PC-3 (cell line): ENCODE measurements at regions of chr19 and their contacts with region 1.

Region 1: DNA sequence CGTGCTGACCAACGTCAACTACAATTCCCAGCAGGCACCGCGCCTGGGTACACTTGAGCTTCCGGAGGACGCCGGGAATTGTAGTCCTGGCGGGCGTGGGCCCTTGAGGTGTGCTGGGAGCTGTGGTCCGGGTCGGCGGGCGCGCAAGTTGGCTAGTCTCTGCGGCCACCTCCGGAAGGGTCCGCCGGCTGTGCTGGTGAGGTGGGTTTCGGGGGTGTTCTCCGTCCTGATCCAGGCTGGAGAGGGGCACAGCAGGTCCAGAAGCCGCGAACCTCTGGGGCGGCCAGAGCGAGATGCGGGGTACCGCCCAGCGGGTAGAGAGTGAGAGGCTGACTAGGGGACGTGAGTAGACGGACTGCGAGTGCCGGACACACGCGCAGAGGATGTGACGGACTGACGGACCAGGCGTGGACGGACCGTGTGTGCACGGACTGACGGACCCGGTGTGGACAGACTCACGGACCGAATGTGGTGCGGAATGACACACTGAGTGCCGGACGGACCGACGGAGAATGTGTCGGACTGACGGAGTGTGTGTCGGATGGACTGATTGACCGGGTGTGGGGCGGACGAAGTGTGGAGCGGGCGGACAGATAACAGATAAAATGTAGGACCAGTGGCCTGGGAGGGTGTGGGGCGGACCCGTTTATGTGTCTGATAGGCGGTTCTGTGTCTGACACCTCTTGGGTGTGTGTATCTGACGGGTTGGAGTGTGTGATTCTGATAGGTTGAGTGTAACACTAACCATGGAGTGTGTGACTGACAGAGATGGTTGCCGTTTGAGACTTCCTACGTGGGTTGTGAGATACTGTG is at the start of gene ZSCAN22:
- DNase-seq: peak; percentile 99
- ATAC-seq: peak; percentile 85
- H3K4me3 ChIP-seq: peak within 1 kb of the TSS; percentile 94
- H3K27ac ChIP-seq: peak within 1 kb of the TSS; percentile 63
- H3K4me1 ChIP-seq: peaks cover 26% of the 10 kb centered on the region
- H3K27me3 ChIP-seq: no peaks in the 10 kb centered on the region
- CTCF ChIP-seq: no peak
- total RNA-seq, gene ZSCAN22: 4.0 and 4.3 TPM in 2 replicates

Region 2: DNA sequence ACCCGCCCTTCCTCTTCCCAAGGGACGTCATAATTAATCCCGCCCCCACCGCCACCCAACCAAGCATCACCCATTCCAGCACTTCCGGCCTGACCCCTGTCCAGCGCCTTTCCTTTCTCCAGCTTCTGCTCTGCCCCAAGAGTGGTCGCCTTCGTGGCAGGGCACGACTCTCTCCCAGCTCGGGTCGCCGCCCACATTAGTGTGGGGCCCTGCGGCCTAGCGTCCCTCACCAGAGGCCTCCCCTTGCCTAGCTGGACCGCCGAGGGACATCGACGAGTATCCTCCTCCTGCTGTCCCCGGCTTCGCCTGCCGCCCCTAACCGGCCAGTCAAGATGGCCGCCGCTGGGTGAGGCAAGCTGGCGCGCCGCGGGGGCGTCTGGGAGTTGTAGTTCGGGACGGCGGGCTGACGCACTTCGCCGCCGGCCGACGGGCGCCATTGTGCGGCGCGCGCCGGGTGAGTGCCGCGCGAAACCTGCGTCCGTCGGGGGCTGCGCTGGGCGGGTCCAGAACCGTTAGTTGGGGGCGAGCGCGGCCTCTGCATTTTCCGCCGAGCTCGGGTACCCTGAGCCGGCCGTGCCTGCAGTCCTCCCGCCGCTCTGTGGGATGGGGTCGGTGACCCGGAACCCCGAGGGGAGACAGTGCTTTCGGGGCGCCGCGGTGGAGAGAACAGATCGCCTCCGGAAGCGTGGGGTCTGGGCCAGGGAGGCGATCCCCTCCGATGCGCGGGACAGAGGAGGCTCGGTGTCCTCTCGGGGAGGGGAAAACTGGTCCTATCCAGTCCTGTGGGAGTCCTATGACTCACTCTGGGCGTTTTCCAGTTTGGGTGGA is 143.9 kb before region 1 on chr19 and contains the start of gene ZNF274:
- CTCF ChIA-PET with region 1: no interaction called
- POLR2A ChIA-PET with region 1: no interaction called
- intact Hi-C with region 1: loop called (anchors 2 kb)
- DNase-seq: peak; percentile 96
- ATAC-seq: peak; percentile 92
- H3K4me3 ChIP-seq: peak within 1 kb of the TSS; percentile 76
- H3K27ac ChIP-seq: peak within 1 kb of the TSS; percentile 88
- H3K4me1 ChIP-seq: no peaks in the 10 kb centered on the region; the same call in 1 of the 2 replicates
- H3K27me3 ChIP-seq: no peaks in the 10 kb centered on the region
- CTCF ChIP-seq: no peak
- total RNA-seq, gene ZNF274: 15.4 and 16.1 TPM in 2 replicates

Region 3: DNA sequence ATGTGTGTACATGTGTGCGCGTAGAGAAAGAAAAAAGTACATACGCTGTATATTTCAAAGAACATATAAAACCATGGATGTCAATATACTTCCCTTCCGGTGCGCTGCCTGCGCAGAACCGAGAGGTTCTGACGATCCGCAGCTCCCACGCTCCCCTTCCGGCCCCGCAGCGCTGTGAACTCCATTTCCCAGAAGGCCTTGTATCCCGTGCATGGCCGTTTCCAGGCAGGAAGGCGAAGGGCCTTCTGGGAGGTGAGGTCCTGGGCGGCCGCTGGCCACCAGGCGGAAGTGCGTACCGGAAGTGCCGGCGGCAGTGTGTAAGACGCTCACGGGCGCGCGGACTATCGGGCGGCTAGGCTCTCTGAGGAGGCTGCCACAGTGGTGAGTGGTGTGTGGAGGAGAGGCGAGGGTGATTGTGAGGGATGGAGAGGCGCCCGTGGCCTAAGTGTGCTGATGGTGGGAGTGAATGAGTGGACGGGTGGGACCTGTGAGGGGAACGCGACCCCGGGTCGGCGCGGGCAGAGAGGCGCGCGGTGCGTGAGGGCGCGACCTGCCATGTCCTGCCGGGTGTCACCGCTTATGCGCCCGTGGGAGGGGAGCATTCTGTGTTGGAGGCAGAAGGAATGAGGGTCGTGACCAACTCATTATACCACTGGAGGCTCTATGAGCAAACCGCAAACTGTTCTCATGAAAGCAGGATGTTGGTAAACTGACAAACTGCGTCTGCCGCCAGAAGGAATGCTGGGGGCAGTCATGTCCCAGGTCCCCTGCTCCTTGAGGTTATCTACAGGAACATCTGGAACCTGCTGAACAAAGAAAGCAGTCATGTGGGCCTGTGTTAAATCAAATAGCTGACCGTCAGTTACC is 21.8 kb before region 1 on chr19 and contains the start of gene ERVK3-1:
- CTCF ChIA-PET with region 1: no interaction called
- POLR2A ChIA-PET with region 1: interaction called, 3 read pairs
- intact Hi-C with region 1: loop called (anchors 1 kb)
- DNase-seq: peak; percentile 98
- ATAC-seq: peak; percentile 100
- H3K4me3 ChIP-seq: peak within 1 kb of the TSS; percentile 81
- H3K27ac ChIP-seq: peak within 1 kb of the TSS; percentile 8
- H3K4me1 ChIP-seq: peaks cover 8% of the 10 kb centered on the region
- H3K27me3 ChIP-seq: no peaks in the 10 kb centered on the region
- CTCF ChIP-seq: no peak
- total RNA-seq, gene ERVK3-1: 104 and 116 TPM in 2 replicates

Region 4: DNA sequence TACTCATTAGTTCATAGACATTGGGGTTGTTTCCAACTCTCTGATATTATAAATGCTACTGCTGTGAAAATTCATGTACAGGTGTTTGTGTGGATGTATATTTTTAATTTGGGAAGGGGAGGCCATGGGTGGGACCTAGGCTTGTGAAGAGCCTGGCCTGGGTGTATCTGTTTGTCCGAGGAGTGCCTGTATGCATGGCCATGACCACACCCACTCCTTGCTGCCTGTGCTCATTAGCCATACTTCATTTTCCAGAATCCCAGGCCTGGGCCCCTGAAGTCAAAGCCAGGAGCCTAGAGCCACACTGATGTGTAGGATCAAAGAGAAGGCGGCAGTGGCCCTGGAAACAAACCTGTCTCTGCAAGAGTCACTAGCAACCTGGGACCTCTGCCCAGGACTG is 11.5 kb before region 1 on chr19:
- CTCF ChIA-PET with region 1: no interaction called
- POLR2A ChIA-PET with region 1: no interaction called
- intact Hi-C with region 1: no loop called
- DNase-seq: no peak
- ATAC-seq: no peak
- H3K4me3 ChIP-seq: no peak overlapping the region
- H3K27ac ChIP-seq: no peak overlapping the region
- H3K4me1 ChIP-seq: no peaks in the 10 kb centered on the region
- H3K27me3 ChIP-seq: no peaks in the 10 kb centered on the region
- CTCF ChIP-seq: no peak

Region 5: DNA sequence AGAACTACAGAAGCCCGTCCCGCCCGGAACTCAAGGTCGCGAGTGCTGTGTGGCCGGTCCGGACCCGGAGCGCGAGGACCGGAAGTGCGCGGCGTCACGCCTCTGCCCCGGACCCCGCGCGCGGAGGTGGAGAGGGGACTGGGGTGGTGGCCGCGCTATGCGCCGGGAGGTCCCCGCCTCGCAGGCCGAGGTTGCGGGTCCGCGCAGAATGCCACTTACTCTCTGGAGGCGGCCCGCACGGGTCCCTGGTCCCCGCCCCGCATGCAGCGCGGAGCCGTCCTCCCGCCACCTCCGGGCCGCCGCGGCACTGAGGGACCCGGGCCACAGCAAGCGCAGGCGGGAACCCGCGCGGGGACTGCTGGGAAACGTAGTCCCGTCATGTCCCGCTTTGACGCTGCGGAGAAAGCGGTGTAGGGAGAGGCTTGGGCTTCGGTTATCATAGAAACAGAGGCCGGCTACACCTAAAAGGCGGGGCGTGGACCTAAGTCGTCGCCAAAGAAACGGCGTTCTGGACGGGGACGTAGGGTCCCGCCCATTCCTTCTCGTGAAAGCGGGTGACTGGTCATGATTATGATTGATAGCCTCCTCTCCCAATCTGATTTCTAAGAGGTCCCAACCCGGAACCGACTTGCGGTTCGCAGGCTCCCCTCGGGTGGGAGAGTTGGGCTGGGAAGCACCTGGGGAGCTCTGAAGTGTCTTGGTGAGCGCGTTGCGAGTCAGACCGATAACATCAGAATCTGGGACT is 53.8 kb after region 1 on chr19 and contains the start of gene ZNF837:
- CTCF ChIA-PET with region 1: no interaction called
- POLR2A ChIA-PET with region 1: no interaction called
- intact Hi-C with region 1: loop called (anchors 1 kb)
- DNase-seq: peak; percentile 100
- ATAC-seq: peak; percentile 91
- H3K4me3 ChIP-seq: peak within 1 kb of the TSS; percentile 79
- H3K27ac ChIP-seq: peak within 1 kb of the TSS; percentile 73
- H3K4me1 ChIP-seq: peaks cover 20% of the 10 kb centered on the region
- H3K27me3 ChIP-seq: no peaks in the 10 kb centered on the region
- CTCF ChIP-seq: no peak
- total RNA-seq, gene ZNF837: 9.5 and 12.6 TPM in 2 replicates

Region 6: DNA sequence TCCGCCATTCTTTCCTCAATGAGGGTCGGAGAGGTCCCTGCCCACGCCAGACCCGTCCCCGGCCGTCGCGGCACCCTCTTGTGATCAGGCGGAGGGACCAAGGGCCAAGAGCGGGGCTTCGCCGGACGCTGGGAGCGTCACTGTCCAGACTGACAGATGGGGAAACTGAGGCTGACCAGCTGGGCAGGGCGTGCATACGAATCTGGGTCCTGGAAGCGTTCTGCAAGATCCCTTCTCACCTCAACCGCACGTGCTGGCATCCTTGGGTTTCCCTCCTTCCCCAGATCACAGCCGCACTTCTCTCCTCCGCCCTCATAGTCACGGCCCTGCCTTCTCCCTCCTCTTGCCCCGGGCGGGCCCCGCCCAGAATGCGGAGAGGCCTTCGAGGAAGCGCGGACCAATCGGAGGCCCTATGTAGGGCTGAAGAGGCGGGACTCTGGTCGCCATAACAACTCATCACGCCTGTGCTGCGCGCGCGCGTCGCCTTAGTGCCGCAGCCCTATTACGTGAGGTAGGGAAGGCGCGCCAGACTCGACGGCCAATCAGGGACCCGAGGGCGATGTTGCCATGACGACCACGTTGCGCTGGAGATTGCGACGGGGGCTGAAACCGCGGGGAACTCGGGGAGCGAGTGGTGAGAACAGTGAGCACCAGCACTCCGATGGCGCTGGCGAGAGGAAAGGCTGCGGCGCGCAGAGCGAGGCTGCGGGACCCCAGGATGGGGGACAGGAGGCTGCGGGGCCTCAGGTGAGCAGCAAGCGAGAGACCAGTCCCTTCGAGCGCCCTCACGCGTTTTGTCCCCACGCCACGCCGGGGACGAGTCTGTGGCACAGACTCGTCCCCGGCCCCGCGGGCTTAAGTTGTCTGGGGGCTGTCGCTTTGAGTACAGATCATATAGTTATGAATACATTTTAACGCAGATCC is 74.1 kb after region 1 on chr19:
- CTCF ChIA-PET with region 1: no interaction called
- POLR2A ChIA-PET with region 1: no interaction called
- intact Hi-C with region 1: loop called (anchors 5 kb)
- DNase-seq: peak; percentile 100
- ATAC-seq: peak; percentile 93
- H3K4me3 ChIP-seq: peak overlapping the region; percentile 84
- H3K27ac ChIP-seq: no peak overlapping the region
- H3K4me1 ChIP-seq: peaks cover 15% of the 10 kb centered on the region
- H3K27me3 ChIP-seq: no peaks in the 10 kb centered on the region
- CTCF ChIP-seq: 0 out of 2 replicates have a peak, but pooled peaks have one; percentile 21